AG04449 (cell line): ENCODE measurements at regions of chr15 and their contacts with region 1.

Region 1: DNA sequence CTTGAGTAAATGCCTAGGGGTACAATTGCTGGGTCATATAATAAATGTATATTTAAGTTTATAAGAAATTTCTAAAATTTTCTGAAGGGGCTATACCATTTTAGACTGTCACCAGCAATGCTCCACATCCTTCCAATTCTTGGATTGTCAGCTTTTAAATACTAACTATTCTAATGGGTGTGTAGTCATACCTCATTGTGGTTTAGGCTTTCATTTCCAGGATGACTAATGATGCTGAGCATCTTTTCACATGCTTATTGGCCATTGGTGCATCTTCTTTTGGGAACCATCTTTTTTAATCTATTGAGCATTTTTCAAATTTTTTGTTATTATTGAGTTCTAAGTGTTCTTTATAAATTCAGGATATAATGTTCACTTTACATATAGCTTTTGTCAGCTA is 52.5 kb upstream of the CORO2B start:
- DNase-seq: no peak
- H3K4me3 ChIP-seq: no peak overlapping the region
- CTCF ChIP-seq: no peak

Region 2: GRCh38 chr15:68158046-68158628 is 368.1 kb before region 1 on chr15:
- CTCF ChIA-PET with region 1: no interaction called
- POLR2A ChIA-PET with region 1: no interaction called
- DNase-seq: no peak
- H3K4me3 ChIP-seq: no peak overlapping the region
- CTCF ChIP-seq: no peak

Region 3: DNA sequence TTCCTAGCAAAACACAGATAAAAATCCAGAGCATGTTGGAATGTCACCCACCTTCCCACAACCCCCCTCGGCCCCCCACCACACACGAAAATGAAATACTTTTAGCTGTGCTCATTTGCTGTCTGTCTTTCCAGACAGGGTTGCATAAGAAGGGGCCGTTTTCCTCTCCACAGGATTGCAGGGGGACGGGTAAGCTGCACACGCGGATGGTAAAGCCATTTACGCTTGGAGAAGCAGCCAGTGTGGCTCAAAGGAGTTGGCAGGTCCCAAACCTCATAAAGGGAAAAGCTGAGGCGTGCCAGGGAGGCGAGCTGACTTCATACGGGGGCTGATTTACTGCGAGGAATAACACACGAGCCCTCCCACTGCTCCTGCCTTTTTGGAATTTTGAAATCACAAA is 46.9 kb before region 1 on chr15:
- CTCF ChIA-PET with region 1: interaction called, 3 read pairs
- POLR2A ChIA-PET with region 1: interaction called, 16 read pairs
- DNase-seq: peak; percentile 97
- H3K4me3 ChIP-seq: no peak overlapping the region
- CTCF ChIP-seq: no peak